ENCODE measurements at regions of chr4 and their contacts with region 1.

Region 1: DNA sequence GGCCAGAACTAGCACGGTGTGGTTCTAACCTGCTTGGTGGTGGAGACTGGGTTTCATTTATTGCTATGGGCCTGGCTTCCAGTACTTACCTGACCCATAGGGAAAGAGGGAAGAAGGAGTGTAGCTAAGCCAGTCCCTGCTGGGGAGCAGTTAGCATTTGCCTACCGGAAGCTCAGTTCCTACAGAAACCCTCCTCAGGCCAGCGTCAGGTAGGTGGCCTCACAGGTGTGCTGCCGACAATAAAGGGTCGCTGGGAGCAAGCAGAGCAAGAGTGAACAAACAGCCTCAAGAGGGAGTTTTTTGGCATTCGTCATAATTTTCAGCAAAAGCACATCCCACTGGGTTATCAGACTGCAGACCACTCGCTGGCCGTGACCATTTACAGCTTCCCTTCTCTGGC is 740.6 kb upstream of the TENM3 start:
- DNase-seq: no peak
- H3K4me3 ChIP-seq: no peak overlapping the region
- H3K27ac ChIP-seq: no peak overlapping the region
- H3K4me1 ChIP-seq: no peaks in the 10 kb centered on the region
- H3K27me3 ChIP-seq: no peaks in the 10 kb centered on the region
- CTCF ChIP-seq: no peak
- POLR2A ChIP-seq: no peak

Region 2: DNA sequence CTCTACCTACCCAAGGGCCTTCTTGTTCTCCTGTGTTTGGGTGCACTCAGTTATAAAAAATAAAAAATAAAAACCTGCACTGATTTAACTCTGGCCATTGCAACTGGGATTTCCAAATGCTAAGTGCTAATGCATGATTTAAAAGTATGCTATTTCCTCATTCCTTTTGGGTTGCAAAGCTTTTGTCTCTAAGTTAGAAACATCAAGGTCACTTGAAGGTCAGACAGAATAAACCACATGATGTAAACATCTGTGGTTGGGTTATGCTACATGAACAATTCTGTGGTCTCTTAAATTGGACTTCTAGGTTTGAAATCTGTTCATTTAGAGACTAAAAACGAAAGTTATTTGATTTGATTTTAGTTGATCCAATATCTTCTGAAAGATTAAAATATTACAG is 806.8 kb before region 1 on chr4:
- intact Hi-C with region 1: no loop called
- DNase-seq: no peak
- H3K4me3 ChIP-seq: no peak overlapping the region
- H3K27ac ChIP-seq: no peak overlapping the region
- H3K4me1 ChIP-seq: no peaks in the 10 kb centered on the region
- H3K27me3 ChIP-seq: no peaks in the 10 kb centered on the region
- CTCF ChIP-seq: no peak
- POLR2A ChIP-seq: no peak

Region 3: GRCh38 chr4:181488926-181489325 is 13.7 kb before region 1 on chr4:
- intact Hi-C with region 1: loop called (anchors 1 kb)
- DNase-seq: no peak
- H3K4me3 ChIP-seq: no peak overlapping the region
- H3K27ac ChIP-seq: no peak overlapping the region
- H3K4me1 ChIP-seq: no peaks in the 10 kb centered on the region
- H3K27me3 ChIP-seq: no peaks in the 10 kb centered on the region
- CTCF ChIP-seq: no peak
- POLR2A ChIP-seq: no peak